Prostate gland (tissue), 2 donors: ENCODE measurements at regions of chr18 and their contacts with region 1.

Region 1: DNA sequence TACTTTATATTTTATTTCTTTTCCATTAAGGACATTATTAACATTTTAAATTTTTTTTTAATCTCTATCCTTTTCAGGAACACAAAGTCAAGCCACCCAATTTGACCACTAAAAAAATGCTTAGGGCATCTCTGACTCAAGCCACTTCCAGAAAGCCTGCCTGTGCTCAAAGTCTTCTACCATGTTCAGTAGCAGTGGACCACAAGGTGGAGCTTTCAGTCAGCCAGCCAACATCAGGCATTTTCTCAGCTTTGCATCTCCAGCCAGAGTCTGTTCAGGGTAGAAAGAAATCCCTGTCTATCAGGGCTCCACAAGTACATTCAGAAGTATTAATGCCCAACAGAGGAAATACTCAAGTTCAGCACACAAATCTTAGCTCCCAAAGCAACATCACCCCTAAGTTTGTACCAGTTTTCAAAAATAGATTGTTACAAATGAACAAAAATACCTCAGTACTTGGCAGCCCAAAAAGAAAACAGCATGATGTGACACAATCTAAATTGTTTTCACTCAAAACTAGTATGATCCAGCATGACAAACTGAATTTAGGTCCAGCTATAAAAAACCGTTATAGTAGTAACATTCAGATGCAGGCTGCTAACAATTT is 37.6 kb downstream of the C18orf63 start:
- DNase-seq: peak; percentile 60
- H3K4me3 ChIP-seq: no peak overlapping the region
- H3K27ac ChIP-seq: no peak overlapping the region
- H3K4me1 ChIP-seq: no peaks in the 10 kb centered on the region
- H3K27me3 ChIP-seq: no peaks in the 10 kb centered on the region
- CTCF ChIP-seq: peak; percentile 46 to 83 (median 66)
- POLR2A ChIP-seq: no peak

Region 2: GRCh38 chr18:74147779-74148542 is 205.3 kb before region 1 on chr18 and contains the starts of genes FBXO15 and TIMM21:
- intact Hi-C with region 1: no loop called
- DNase-seq: peak; percentile 91
- H3K4me3 ChIP-seq: peak within 1 kb of the TSS; percentile 56
- H3K27ac ChIP-seq: peak within 1 kb of the TSS; percentile 83 to 88
- H3K4me1 ChIP-seq: peaks cover 2% of the 10 kb centered on the region
- H3K27me3 ChIP-seq: no peaks in the 10 kb centered on the region
- CTCF ChIP-seq: peak in 2 of 4 experiments; percentile 12 to 31
- POLR2A ChIP-seq: peak; percentile 33
- total RNA-seq, gene FBXO15: 4.2 to 7.8 TPM
- total RNA-seq, gene TIMM21: 27.6 to 33.1 TPM

Region 3: GRCh38 chr18:74303936-74304335 is 49.3 kb before region 1 on chr18:
- intact Hi-C with region 1: no loop called
- DNase-seq: no peak
- H3K4me3 ChIP-seq: no peak overlapping the region
- H3K27ac ChIP-seq: no peak overlapping the region
- H3K4me1 ChIP-seq: no peaks in the 10 kb centered on the region
- H3K27me3 ChIP-seq: no peaks in the 10 kb centered on the region
- CTCF ChIP-seq: no peak
- POLR2A ChIP-seq: no peak

Region 4: DNA sequence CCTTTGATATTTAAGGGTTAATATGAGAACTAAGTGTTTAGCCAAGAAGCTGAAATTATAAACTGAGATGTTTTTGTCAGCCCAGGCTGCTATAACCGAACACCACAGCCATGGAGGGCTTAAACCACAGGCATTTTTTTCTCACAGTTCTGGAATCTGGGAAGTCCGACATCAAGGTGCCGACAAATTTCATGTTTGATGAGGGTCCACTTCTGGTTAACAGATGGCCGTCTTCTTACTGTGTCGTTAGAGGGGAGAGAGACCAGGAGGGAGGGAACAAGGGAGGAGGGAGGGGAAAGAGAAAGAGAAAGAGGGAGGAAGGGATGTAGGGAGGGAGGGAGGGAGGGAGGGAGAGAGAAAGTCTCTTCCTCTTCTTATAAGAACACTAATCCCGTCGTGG is 136.4 kb after region 1 on chr18:
- intact Hi-C with region 1: loop called (anchors 5 kb)
- DNase-seq: no peak
- H3K4me3 ChIP-seq: no peak overlapping the region
- H3K27ac ChIP-seq: no peak overlapping the region
- H3K4me1 ChIP-seq: no peaks in the 10 kb centered on the region
- H3K27me3 ChIP-seq: no peaks in the 10 kb centered on the region
- CTCF ChIP-seq: no peak
- POLR2A ChIP-seq: no peak

Region 5: GRCh38 chr18:74551936-74552555 is 198.8 kb after region 1 on chr18:
- intact Hi-C with region 1: loop called (anchors 5 kb)
- DNase-seq: peak; percentile 86
- H3K4me3 ChIP-seq: no peak overlapping the region
- H3K27ac ChIP-seq: no peak overlapping the region
- H3K4me1 ChIP-seq: no peaks in the 10 kb centered on the region
- H3K27me3 ChIP-seq: no peaks in the 10 kb centered on the region
- CTCF ChIP-seq: peak; percentile 44 to 84 (median 81)
- POLR2A ChIP-seq: no peak